Uterus (tissue), 4 donors: ENCODE measurements at regions of chr1 and their contacts with region 1.

Region 1: DNA sequence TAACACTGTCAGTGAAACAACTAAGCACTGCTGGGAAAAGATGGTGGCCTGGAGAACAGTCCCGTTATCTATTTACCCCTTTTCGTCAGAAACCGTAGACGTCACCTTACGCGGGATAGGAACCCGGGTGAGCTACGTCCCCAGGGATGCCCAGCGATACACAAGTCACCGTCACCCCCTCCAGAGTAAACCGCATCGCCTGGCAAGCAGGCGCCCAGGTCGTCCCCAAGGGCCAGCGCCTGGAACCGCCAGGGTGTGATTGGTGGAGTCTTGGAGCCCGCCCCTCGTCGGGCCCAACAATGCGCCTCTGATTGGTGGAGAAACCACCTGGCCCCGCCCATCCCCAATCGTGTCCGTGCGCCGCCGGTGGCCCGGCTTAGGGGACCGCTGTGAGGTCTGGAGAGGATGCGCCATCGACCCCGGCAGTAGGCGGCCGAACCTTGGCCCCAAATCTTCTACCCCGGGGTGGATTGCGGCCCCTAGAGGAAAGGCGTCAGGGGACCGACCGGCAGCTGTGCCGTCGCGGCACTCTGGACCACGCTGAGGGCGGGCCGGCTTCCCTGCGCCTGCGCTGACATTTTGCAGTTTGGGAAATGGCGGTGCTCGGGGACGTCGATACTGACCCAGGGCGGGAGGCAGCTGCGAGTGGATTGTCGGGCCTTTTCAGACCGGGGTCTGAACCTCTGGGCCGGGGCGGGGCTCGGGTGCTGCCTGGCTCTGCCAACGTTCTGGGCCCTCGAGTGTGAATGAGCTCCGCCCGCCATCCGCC is 34.4 kb downstream of the SLC2A1 start:
- DNase-seq: peak; percentile 93
- H3K4me3 ChIP-seq: peak overlapping the region; percentile 85 to 92
- H3K27ac ChIP-seq: peak overlapping the region; percentile 93 to 97
- H3K4me1 ChIP-seq: no peaks in the 10 kb centered on the region
- H3K27me3 ChIP-seq: no peaks in the 10 kb centered on the region
- CTCF ChIP-seq: peak; percentile 17 to 38 (median 30)
- POLR2A ChIP-seq: peak; percentile 80 to 86

Region 2: GRCh38 chr1:42784946-42785693 is 139.1 kb before region 1 on chr1 and contains the start of gene TMEM269:
- intact Hi-C with region 1: no loop called
- DNase-seq: no peak
- H3K4me3 ChIP-seq: peak within 1 kb of the TSS; percentile 35
- H3K27ac ChIP-seq: no peak within 1 kb of the TSS
- H3K4me1 ChIP-seq: no peaks in the 10 kb centered on the region
- H3K27me3 ChIP-seq: no peaks in the 10 kb centered on the region
- CTCF ChIP-seq: no peak
- POLR2A ChIP-seq: no peak
- total RNA-seq, gene TMEM269: 0.07 to 1.1 TPM in 2 of 4 donors, not detected in the others

Region 3: GRCh38 chr1:43067977-43068751 is 143.9 kb after region 1 on chr1:
- intact Hi-C with region 1: loop called (anchors 10 kb)
- DNase-seq: no peak
- H3K4me3 ChIP-seq: peak overlapping the region in 1 of 2 donors; percentile 36
- H3K27ac ChIP-seq: no peak overlapping the region
- H3K4me1 ChIP-seq: no peaks in the 10 kb centered on the region
- H3K27me3 ChIP-seq: no peaks in the 10 kb centered on the region
- CTCF ChIP-seq: no peak
- POLR2A ChIP-seq: no peak

Region 4: GRCh38 chr1:43184995-43185394 is 260.7 kb after region 1 on chr1:
- intact Hi-C with region 1: no loop called
- DNase-seq: no peak
- H3K4me3 ChIP-seq: no peak overlapping the region
- H3K27ac ChIP-seq: no peak overlapping the region
- H3K4me1 ChIP-seq: no peaks in the 10 kb centered on the region
- H3K27me3 ChIP-seq: no peaks in the 10 kb centered on the region
- CTCF ChIP-seq: no peak
- POLR2A ChIP-seq: no peak